B cell (primary cell): ENCODE measurements at regions of chr12 and their contacts with region 1.

Region 1: GRCh38 chr12:121917979-121918678 is at the start of gene CFAP251:
- DNase-seq: peak; percentile 96
- ATAC-seq: peak; percentile 98
- H3K4me3 ChIP-seq: peak within 1 kb of the TSS in 4 of 5 experiments; percentile 28 to 64 (median 52)
- H3K4me3 Mint-ChIP-seq: peak within 1 kb of the TSS; percentile 92
- H3K27ac ChIP-seq: peak within 1 kb of the TSS in 1 of 2 donors; percentile 77
- H3K27ac Mint-ChIP-seq: peak within 1 kb of the TSS; percentile 80
- H3K4me1 ChIP-seq: peaks cover 8 to 11% of the 10 kb centered on the region in 2 donors
- H3K4me1 Mint-ChIP-seq: peaks cover 11% of the 10 kb centered on the region
- H3K27me3 ChIP-seq: no peaks in the 10 kb centered on the region
- H3K27me3 Mint-ChIP-seq: no peaks in the 10 kb centered on the region
- CTCF ChIP-seq: peak; percentile 86
- total RNA-seq, gene CFAP251: 1.4 and 1.6 TPM in 2 replicates

Region 2: DNA sequence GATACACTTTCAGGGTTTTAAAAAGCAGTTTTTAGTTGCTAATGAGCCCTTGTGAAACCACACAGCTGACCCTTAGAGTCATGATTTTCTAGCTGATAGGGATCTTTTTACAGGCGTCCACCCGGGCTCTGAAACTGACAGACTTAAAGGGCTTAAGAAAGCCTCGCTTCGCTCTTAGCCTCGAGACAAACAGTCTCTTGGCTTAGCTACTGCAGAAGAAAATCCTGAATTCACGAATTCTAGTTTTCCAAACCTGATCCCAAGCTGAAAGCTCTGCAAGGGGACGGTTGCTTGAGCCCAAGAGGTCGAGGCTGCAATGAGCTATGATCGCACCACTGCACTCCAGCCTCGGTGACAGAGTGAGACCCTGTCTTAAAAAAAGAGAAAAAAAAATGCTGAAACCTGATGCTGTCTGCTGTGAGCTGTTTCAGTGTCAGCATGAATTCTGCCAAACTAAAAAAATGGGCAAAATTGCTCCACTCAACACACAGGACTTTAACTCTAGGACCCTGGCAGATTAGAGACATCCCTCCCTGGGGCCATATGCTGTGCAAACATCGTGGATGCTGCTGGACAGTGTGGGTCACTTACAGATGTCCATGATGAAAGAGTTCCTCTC is 56.4 kb before region 1 on chr12:
- CTCF ChIA-PET with region 1: no interaction called
- POLR2A ChIA-PET with region 1: no interaction called
- intact Hi-C with region 1: no loop called
- DNase-seq: no peak
- ATAC-seq: no peak
- H3K4me3 ChIP-seq: no peak overlapping the region
- H3K4me3 Mint-ChIP-seq: no peak overlapping the region
- H3K27ac ChIP-seq: no peak overlapping the region
- H3K27ac Mint-ChIP-seq: no peak overlapping the region
- H3K4me1 ChIP-seq: peaks cover 0 to 6% of the 10 kb centered on the region in 2 donors
- H3K4me1 Mint-ChIP-seq: no peaks in the 10 kb centered on the region
- H3K27me3 ChIP-seq: no peaks in the 10 kb centered on the region
- H3K27me3 Mint-ChIP-seq: no peaks in the 10 kb centered on the region
- CTCF ChIP-seq: no peak

Region 3: DNA sequence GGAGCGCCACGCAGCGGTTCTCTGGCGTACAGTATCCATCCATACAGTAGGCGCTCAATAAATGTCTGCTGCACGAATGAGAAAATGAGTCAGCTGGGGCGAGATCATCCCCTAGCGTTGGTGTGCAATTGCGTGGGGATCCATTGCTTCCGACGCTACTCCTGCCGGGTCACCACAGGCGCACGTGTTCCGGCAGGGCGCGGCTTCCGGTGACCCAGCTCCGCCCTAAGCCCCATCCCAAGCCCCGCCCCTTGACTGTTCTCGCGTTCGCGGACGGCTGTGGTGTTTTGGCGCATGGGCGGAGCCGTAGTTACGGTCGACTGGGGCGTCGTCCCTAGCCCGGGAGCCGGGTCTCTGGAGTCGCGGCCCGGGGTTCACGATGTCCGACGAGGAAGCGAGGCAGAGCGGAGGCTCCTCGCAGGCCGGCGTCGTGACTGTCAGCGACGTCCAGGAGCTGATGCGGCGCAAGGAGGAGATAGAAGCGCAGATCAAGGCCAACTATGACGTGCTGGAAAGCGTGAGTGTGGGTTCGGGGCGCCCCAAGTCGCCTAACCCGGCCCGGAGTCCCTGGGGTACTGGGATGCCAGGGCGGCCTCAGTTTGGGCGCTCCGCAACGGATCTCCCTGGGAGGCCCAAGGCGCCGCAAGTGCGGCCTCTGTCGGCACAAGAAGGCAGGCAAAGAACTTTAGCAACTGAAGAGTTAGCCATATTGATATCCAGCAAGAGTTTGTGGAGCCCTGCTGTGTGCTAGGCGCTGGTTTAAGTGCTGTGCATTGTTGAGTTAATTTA is 29.5 kb before region 1 on chr12 and contains the start of gene PSMD9:
- CTCF ChIA-PET with region 1: interaction called, 3 read pairs
- POLR2A ChIA-PET with region 1: no interaction called
- intact Hi-C with region 1: loop called (anchors 2 kb)
- DNase-seq: peak; percentile 98
- ATAC-seq: peak; percentile 96
- H3K4me3 ChIP-seq: peak within 1 kb of the TSS; percentile 70 to 92 (median 78)
- H3K4me3 Mint-ChIP-seq: peak within 1 kb of the TSS; percentile 99
- H3K27ac ChIP-seq: peak within 1 kb of the TSS; percentile 86 to 95
- H3K27ac Mint-ChIP-seq: peak within 1 kb of the TSS; percentile 99
- H3K4me1 ChIP-seq: peaks cover 15 to 19% of the 10 kb centered on the region in 2 donors
- H3K4me1 Mint-ChIP-seq: peaks cover 32% of the 10 kb centered on the region
- H3K27me3 ChIP-seq: peaks cover 0 to 5% (median 0%) of the 10 kb centered on the region in 4 experiments
- H3K27me3 Mint-ChIP-seq: no peaks in the 10 kb centered on the region
- CTCF ChIP-seq: peak; percentile 68
- total RNA-seq, gene PSMD9: 37.1 and 38.2 TPM in 2 replicates

Region 4: GRCh38 chr12:121899590-121899989 is 18.5 kb before region 1 on chr12:
- CTCF ChIA-PET with region 1: no interaction called
- POLR2A ChIA-PET with region 1: no interaction called
- intact Hi-C with region 1: no loop called
- DNase-seq: no peak
- ATAC-seq: no peak
- H3K4me3 ChIP-seq: no peak overlapping the region
- H3K4me3 Mint-ChIP-seq: no peak overlapping the region
- H3K27ac ChIP-seq: no peak overlapping the region
- H3K27ac Mint-ChIP-seq: no peak overlapping the region
- H3K4me1 ChIP-seq: no peaks in the 10 kb centered on the region
- H3K4me1 Mint-ChIP-seq: no peaks in the 10 kb centered on the region
- H3K27me3 ChIP-seq: no peaks in the 10 kb centered on the region
- H3K27me3 Mint-ChIP-seq: no peaks in the 10 kb centered on the region
- CTCF ChIP-seq: no peak

Region 5: GRCh38 chr12:122003651-122004611 is 85.8 kb after region 1 on chr12:
- CTCF ChIA-PET with region 1: interaction called, 8 read pairs
- POLR2A ChIA-PET with region 1: interaction called, 4 read pairs
- intact Hi-C with region 1: loop called (anchors 1 kb)
- DNase-seq: peak; percentile 89
- ATAC-seq: peak; percentile 87
- H3K4me3 ChIP-seq: peak overlapping the region in 2 of 5 experiments; percentile 26 to 44
- H3K4me3 Mint-ChIP-seq: peak overlapping the region; percentile 79
- H3K27ac ChIP-seq: peak overlapping the region; percentile 77 to 80
- H3K27ac Mint-ChIP-seq: peak overlapping the region; percentile 93
- H3K4me1 ChIP-seq: peaks cover 68 to 75% of the 10 kb centered on the region in 2 donors
- H3K4me1 Mint-ChIP-seq: peaks cover 75% of the 10 kb centered on the region
- H3K27me3 ChIP-seq: no peaks in the 10 kb centered on the region
- H3K27me3 Mint-ChIP-seq: no peaks in the 10 kb centered on the region
- CTCF ChIP-seq: no peak

Region 6: GRCh38 chr12:122031342-122032216 is 113.5 kb after region 1 on chr12:
- CTCF ChIA-PET with region 1: interaction called, 55 read pairs
- POLR2A ChIA-PET with region 1: interaction called, 4 read pairs
- intact Hi-C with region 1: loop called (anchors 1 kb)
- DNase-seq: peak; percentile 70
- ATAC-seq: peak; percentile 39
- H3K4me3 ChIP-seq: no peak overlapping the region
- H3K4me3 Mint-ChIP-seq: peak overlapping the region; percentile 29
- H3K27ac ChIP-seq: peak overlapping the region; percentile 18 to 70
- H3K27ac Mint-ChIP-seq: peak overlapping the region; percentile 71
- H3K4me1 ChIP-seq: peaks cover 51 to 67% of the 10 kb centered on the region in 2 donors
- H3K4me1 Mint-ChIP-seq: peaks cover 61% of the 10 kb centered on the region
- H3K27me3 ChIP-seq: no peaks in the 10 kb centered on the region
- H3K27me3 Mint-ChIP-seq: no peaks in the 10 kb centered on the region
- CTCF ChIP-seq: peak; percentile 81

Region 7: DNA sequence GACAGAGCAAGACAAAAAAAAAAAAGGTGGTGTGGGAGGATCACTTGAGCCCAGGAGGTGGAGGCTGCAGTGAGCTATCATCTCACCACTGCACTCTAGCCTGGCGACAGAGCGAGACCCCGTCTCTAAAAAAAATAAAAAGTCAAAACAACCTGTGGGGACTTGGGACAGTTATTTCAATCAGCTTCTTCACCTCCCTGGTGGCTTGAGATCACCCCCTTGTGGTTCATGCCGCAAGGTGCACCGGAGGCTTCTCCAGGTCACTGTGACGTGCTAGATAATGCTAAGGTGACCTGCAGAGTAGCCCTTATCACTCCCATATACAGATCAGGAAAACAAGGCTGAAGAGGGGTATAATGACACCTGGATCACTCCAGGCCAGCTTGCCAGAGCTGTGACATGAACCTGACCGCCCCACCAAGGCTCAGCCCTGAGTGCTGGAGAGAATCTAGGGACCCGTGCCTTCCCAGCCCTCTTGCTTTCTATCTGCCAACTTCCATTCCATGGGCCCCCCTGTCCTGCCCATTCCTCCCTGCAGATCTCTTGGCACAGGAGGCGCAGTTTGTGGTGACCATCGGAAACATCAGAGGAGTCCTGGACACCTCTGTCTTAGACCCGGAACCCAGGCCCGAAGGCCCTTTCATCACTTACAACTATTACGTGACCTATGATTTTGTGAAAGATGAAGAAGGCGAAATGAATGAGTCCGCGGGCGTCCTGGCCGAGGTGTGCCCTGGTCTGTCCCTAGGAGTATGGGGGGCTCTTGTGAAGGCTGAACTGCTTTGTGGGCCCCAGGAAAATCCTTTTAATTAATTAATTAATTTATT is 272.9 kb after region 1 on chr12:
- CTCF ChIA-PET with region 1: interaction called, 7 read pairs
- POLR2A ChIA-PET with region 1: no interaction called
- intact Hi-C with region 1: loop called (anchors 1 kb)
- DNase-seq: peak; percentile 72
- ATAC-seq: peak; percentile 95
- H3K4me3 ChIP-seq: no peak overlapping the region
- H3K4me3 Mint-ChIP-seq: no peak overlapping the region
- H3K27ac ChIP-seq: no peak overlapping the region
- H3K27ac Mint-ChIP-seq: no peak overlapping the region
- H3K4me1 ChIP-seq: no peaks in the 10 kb centered on the region
- H3K4me1 Mint-ChIP-seq: peaks cover 2% of the 10 kb centered on the region
- H3K27me3 ChIP-seq: peaks cover 0 to 4% (median 0%) of the 10 kb centered on the region in 4 experiments
- H3K27me3 Mint-ChIP-seq: peaks cover 16% of the 10 kb centered on the region
- CTCF ChIP-seq: peak; percentile 75